ENCODE measurements at regions of chr16 and their contacts with region 1.

Region 1: GRCh38 chr16:46743238-46743719 is 4.9 kb downstream of the MYLK3 start:
- DNase-seq: peak; percentile 38
- ATAC-seq: peak; percentile 82
- H3K4me3 Mint-ChIP-seq: peak overlapping the region; percentile 86
- H3K27ac Mint-ChIP-seq: peak overlapping the region; percentile 97
- H3K4me1 Mint-ChIP-seq: peaks cover 24% of the 10 kb centered on the region
- H3K27me3 Mint-ChIP-seq: no peaks in the 10 kb centered on the region
- CTCF ChIP-seq: no peak

Region 2: DNA sequence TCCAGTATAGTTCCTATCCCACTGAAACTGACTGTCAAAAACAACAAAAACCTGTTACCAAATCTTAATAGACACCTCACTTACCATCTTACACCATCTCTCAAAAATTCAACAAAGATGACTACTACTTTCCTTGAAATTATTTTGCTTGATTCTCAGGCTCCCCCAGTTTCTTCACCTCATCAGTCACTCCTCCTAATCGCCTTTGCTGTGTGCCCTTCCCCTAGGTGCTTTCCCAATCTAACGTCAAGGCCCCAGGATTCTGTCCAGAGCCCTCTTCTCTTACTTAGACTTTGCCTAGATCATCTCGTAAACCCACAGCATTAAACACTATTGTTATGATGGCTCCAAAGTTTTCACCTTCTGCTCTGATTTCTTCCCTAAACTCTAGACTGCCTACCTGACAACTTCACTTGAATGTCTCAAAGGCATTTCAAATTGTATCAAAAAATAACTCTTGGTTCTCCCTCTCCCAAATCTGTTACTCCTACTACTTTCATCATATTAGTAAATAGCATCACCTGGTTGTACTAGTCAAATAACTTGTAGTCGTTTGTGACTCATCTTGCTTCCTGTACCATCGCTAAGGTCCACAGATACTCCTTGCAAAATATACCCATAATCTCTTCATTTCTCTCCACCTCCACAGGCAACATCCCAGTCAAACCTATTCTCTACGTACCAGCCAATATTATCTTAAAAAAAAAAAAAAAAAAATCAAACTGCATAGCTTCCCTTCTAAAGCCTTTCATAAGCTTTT is 69.7 kb after region 1 on chr16:
- CTCF ChIA-PET with region 1: no interaction called
- POLR2A ChIA-PET with region 1: no interaction called
- intact Hi-C with region 1: no loop called
- DNase-seq: no peak
- ATAC-seq: no peak
- H3K4me3 Mint-ChIP-seq: no peak overlapping the region
- H3K27ac Mint-ChIP-seq: no peak overlapping the region
- H3K4me1 Mint-ChIP-seq: peaks cover 39% of the 10 kb centered on the region
- H3K27me3 Mint-ChIP-seq: no peaks in the 10 kb centered on the region
- CTCF ChIP-seq: no peak

Region 3: DNA sequence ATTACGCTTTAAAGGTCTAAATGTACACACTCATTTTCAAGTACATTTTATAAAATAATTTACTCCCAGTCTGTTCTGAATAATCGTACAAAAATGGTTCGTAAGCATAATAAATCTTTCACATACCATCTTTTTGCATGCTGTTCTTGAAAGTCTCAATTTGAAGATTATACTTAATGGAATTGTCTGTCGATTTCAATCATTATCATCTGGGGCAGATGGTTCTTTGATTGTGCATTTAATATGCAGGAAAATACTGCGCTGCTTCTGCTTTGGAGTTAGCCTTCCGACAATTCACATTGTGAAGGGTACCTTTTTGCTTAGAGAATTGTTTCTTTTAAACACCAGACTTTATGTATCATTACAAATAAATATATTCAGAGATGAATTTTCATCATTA is 1149.7 kb after region 1 on chr16:
- CTCF ChIA-PET with region 1: no interaction called
- POLR2A ChIA-PET with region 1: no interaction called
- intact Hi-C with region 1: loop called (anchors 5 kb)
- DNase-seq: no peak
- ATAC-seq: no peak
- H3K4me3 Mint-ChIP-seq: no peak overlapping the region
- H3K27ac Mint-ChIP-seq: no peak overlapping the region
- H3K4me1 Mint-ChIP-seq: no peaks in the 10 kb centered on the region
- H3K27me3 Mint-ChIP-seq: peaks cover 20% of the 10 kb centered on the region
- CTCF ChIP-seq: no peak